Activated naive CD4-positive, alpha-beta T cell treated with anti-CD3 and anti-CD28 coated beads for 36 hours (primary cell): ENCODE measurements at regions of chr7 and their contacts with region 1.

Region 1: DNA sequence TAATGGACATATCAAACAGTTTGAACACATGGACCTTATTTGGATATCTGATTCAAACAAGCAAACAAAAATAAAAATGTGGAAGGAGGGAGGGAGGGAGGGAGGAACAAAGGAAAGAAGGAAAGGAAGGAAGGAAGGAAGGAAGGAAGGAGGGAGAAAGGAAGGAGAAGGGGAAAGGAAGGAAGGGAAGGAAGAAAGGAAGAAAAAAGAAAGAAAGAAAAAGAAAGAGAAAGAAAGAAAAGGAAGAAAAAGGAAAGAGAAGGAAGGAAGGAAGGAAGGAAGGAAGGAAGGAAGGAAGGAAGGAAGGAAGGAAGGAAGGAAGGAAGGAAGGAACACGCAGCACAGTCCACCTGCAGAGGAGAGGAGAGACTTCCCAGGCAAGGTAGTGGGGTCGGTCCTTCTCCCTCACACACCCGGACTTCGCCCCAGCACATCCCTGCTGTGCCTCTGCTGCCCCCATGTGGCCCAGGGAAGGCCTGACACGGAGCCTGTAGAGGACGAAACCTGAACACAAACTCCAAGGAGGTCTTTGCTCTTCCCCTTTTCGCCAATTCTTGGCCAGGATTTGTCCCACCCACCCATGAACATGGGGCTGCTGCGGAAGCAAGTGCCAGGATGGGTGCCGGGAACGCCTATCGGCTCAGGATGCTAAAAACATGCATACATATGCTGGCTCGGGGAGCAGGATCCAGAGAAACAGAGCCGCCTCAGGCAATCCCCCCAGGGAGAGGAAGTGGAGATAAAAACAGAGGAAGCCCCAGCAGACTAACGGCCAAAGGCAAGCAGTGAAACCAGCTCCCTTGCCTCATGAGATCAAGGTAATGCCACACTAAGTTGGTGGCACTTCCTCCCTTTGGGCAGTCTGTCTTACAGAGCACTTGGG is 52.3 kb upstream of the DGKI start:
- DNase-seq: peak; percentile 86
- H3K4me3 Mint-ChIP-seq: no peak overlapping the region
- H3K27ac Mint-ChIP-seq: no peak overlapping the region
- H3K4me1 Mint-ChIP-seq: peaks cover 23% of the 10 kb centered on the region
- H3K27me3 Mint-ChIP-seq: no peaks in the 10 kb centered on the region

Region 2: GRCh38 chr7:137443616-137444015 is 455.5 kb before region 1 on chr7:
- CTCF ChIA-PET with region 1: no interaction called
- intact Hi-C with region 1: no loop called
- DNase-seq: no peak
- H3K4me3 Mint-ChIP-seq: no peak overlapping the region
- H3K27ac Mint-ChIP-seq: no peak overlapping the region
- H3K4me1 Mint-ChIP-seq: no peaks in the 10 kb centered on the region
- H3K27me3 Mint-ChIP-seq: peaks cover 2% of the 10 kb centered on the region

Region 3: DNA sequence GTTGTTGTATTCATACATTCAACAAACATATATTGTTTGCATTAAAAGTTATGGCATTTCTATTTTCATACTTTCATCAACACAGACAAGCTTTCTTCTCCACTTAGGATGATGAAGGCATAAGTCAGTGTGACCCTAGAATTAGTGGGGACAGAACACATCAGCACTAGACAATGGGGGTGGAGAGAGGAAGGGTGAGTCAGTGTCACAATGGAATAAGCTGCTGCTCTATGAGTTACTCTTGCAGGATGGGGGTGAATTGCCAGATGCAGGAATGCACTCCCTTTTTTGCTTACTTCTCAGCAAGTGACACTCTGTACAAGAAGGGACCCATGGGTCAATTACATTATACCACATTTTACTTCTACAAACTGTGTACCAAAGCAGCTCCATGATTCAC is 126.3 kb before region 1 on chr7:
- CTCF ChIA-PET with region 1: no interaction called
- intact Hi-C with region 1: loop called (anchors 10 kb)
- DNase-seq: no peak
- H3K4me3 Mint-ChIP-seq: no peak overlapping the region
- H3K27ac Mint-ChIP-seq: no peak overlapping the region
- H3K4me1 Mint-ChIP-seq: no peaks in the 10 kb centered on the region
- H3K27me3 Mint-ChIP-seq: peaks cover 2% of the 10 kb centered on the region

Region 4: DNA sequence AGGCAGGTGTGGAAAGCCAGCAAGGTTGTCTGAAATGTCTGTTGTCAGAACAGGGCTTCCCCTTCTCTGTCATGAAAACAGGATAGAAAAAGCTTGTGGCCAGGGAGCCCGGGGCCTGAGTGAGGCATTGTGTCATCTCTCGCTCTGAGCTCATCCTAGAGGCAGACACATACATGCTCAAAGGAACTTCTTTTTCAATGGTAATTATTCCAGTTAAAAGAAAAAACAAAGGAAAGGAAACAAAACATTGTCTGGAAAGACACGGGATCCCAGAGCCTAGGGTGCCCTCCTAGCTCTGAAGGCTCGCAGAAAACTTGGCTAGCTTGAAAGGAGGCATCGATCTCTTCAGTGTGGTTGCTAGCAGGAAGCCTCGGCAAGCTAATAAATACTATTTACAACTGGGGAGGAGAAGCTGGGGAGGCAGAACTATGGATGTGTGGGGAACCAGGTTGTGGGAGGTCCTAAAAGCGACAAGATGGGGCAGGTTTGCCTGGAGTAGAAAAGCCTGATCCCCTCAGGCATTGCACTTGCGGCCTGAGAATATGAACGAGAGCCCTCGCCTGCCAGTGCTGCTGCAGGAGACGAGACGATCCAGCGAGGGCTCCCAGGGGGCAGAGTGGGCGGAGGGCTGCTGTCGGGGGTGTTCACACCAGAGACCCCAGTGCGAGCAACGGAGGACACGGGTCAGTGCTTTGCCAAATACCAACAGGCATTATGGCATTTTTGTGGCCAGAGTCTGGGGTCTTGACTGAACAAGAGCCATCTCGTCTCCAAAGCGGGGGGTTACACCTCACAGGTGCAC is 19.5 kb before region 1 on chr7:
- CTCF ChIA-PET with region 1: interaction called, 3 read pairs
- intact Hi-C with region 1: loop called (anchors 2 kb)
- DNase-seq: peak; percentile 36
- H3K4me3 Mint-ChIP-seq: no peak overlapping the region
- H3K27ac Mint-ChIP-seq: no peak overlapping the region
- H3K4me1 Mint-ChIP-seq: peaks cover 9% of the 10 kb centered on the region
- H3K27me3 Mint-ChIP-seq: no peaks in the 10 kb centered on the region

Region 5: DNA sequence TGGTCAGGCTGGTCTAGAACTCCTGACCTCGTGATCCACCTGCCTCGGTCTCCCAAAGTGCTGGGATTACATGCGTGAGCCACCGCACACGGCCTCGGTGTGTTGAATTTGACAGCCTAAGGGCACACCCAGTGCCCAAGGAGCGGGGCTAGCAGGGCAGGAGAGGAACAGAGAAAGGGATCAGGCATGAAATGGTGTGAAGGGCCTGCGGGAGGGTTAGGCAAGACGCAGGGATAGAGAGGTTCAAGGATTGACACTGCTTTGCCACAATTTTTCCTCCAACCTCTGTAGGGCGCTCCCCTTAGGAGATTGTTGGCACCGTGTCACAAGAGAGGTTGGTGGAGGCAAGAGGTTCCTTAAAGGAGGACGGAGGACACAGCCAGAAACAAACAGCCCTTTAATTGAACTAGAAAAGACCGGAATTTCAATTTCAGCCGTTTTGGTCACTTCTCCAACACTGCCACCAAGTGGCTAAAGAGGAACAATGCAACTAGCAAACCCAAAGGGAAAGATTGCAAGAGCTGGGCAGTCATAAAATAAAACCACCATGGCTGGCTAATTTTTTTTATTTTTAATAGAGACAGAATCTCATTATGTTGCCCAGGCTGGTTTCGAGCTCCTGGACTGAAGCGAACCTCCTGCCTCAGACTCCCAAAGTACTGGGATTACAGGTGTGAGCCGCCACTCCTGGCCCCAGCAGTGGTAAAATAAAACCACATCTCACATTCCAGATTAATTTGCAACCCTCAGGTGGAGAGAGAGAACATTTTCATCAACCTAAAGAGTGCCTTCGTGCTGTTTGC is 109.7 kb after region 1 on chr7:
- CTCF ChIA-PET with region 1: interaction called, 283 read pairs
- intact Hi-C with region 1: loop called (anchors 1 kb)
- DNase-seq: peak; percentile 46
- H3K4me3 Mint-ChIP-seq: no peak overlapping the region
- H3K27ac Mint-ChIP-seq: no peak overlapping the region
- H3K4me1 Mint-ChIP-seq: peaks cover 2% of the 10 kb centered on the region
- H3K27me3 Mint-ChIP-seq: no peaks in the 10 kb centered on the region

Region 6: GRCh38 chr7:138738551-138739335 is 839.7 kb after region 1 on chr7:
- CTCF ChIA-PET with region 1: interaction called, 3 read pairs
- intact Hi-C with region 1: loop called (anchors 1 kb)
- DNase-seq: peak; percentile 94
- H3K4me3 Mint-ChIP-seq: no peak overlapping the region
- H3K27ac Mint-ChIP-seq: no peak overlapping the region
- H3K4me1 Mint-ChIP-seq: peaks cover 6% of the 10 kb centered on the region
- H3K27me3 Mint-ChIP-seq: no peaks in the 10 kb centered on the region